Left colon (tissue), 2 donors: ENCODE measurements at regions of chr4 and their contacts with region 1.

Region 1: DNA sequence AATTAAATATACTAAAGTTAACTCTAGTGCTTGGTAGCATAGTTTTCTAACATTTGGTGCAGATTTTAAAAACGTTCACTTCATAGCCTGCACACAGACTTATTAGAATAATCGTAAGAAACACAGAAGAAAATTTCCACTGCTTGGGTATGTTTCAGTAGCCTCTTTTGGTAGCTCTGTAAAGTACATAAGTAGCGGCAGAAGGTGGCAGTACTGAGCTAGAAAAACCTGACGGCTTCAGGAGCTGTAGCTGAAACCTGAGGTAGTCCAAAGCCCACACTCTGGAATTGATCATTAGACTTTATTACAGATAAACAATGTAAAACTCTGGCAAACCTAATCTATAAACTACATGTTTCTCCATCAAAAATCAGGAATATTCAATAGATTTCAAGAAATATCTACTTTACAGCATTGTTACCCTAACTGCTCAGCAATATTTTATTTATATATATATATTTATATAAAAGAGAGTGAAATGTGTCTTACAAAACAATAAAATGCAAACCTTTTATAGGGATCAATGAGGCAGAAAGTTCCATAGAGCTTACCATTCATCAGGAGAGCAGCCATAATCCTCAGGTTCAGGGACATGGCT is 88.2 kb downstream of the ATP8A1 start:
- DNase-seq: peak; percentile 51 to 76
- ATAC-seq: peak; percentile 96

Region 2: DNA sequence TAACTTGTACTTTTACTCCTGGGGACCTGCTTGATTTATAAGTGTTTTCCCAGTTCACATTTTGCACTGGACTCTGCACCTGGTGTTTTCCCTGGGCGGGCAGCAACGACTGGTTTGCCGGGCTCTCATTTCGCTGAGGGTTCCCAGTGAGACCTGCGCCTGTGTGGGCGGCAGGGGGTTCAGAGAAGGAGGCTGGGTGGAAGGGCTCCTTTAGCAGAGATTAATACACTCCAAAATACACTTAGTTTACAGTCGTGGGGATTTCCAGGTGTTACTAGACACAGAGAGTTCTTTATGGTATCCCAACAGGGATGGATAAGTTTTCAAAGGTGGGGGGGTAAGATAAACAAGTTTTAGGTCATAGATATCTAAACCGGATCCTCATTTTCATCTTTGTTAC is 224.4 kb before region 1 on chr4:
- intact Hi-C with region 1: no loop called
- DNase-seq: no peak
- ATAC-seq: peak; percentile 51

Region 3: DNA sequence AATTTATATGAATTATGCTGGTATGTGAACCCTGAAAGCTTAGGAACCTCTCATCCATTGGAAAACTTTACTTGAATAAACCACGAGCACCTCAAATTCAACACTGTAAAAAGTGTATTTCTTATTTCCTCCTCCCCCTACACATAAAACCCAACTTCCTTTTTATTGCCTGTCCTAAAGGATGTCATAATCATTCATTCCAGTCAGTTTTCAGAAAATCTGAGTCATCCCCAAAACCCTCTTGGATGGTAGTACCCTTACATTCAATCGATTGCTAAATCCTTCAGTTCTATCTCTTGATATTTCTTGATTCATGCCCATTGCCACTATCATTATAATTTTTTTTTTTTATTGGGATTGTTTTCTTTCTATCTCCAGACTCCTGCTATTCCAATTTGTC is 179.3 kb after region 1 on chr4:
- intact Hi-C with region 1: loop called in 1 of 2 experiments (anchors 10 kb)
- DNase-seq: no peak
- ATAC-seq: no peak

Region 4: DNA sequence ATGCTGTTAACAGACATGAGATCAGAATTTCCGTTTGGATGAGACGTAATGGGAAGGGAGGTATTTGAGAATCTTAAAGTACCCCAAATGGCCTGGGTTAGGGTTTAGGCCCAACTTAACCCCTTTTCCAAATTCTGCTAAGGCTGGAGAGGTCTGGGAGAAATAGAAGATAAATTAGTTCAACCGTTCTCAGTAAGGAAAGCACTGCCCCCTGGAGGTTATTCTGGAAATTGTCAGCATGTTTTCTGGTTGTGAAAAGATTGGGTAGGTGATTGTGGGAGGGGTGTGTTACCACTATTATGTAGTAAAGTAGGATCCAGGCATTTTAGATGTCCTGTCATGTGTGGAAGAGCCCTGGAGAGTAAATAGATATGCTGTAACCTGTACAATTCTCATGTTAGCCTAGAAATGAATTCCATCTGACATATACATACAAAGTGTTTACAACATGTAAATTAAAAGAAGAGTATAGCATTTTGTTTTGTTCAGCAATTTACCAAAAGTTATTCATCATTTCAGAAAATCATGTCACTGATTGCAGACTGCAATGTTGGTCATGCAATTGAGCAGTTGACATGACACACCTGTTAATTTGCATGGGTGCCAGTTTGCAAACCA is 297.0 kb after region 1 on chr4:
- intact Hi-C with region 1: loop called in 1 of 2 experiments (anchors 2 kb)
- DNase-seq: peak in 1 of 2 donors; percentile 41
- ATAC-seq: peak; percentile 51

Region 5: DNA sequence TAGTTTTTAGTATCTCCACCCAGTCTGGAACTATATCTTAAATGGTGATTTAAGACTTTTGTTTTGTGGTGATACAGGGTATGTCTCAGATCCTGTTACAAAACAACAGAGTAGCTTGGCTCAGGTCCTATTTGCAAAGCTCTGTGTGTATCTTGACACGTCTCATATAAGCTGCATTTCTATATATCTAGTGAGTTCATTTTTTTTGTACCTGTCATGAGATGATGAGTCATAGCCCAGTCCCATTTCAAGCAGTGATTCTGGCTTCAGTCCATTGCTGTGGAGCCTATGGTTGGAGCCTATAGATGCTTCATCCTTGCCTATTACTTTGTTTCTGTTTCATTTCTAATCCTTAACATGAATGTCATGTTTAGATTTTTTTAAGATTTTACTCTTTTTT is 346.8 kb after region 1 on chr4:
- intact Hi-C with region 1: no loop called
- DNase-seq: no peak
- ATAC-seq: no peak